ENCODE measurements at regions of chr9 and their contacts with region 1.

Region 1: GRCh38 chr9:120928483-120929228 is 2.1 kb upstream of the TRAF1 start:
- DNase-seq: peak; percentile 86
- H3K4me3 Mint-ChIP-seq: peak overlapping the region; percentile 80
- H3K27ac Mint-ChIP-seq: peak overlapping the region; percentile 99
- H3K4me1 Mint-ChIP-seq: peaks cover 64% of the 10 kb centered on the region
- H3K27me3 Mint-ChIP-seq: no peaks in the 10 kb centered on the region

Region 2: DNA sequence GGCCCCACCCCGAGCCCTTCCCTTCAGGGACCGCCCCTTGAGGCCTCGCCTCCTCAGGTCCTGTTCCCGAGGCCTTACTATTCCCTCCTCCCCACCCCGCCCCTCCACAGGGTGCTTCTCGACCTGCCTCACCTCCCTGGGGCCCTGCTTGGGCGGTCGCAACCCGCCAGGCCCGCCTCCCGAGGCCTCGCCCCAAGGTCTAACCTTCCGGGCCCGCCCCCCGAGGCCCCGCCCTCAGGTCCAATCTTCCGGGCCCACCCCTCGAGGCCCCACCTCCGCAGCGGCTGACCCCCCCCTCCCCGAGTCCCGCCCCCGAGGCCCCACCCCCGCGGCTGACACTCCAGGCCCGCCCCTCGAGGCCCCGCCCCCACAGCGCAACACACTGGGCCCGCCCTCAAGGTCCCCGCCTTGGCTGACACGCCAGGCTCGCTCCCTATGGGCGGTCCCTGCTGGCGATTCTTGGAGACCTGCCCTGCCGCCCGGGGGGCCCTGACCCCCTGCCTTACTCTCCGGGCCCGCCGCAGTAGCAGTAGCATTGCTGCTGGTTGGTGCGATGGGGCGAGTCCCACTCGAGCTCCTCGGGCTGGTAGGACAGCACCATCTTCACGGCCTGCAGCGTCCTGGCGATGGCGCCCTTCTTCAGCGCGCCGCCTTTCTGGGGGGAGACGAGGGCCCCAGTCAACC is 59.8 kb before region 1 on chr9:
- CTCF ChIA-PET with region 1: interaction called, 5 read pairs
- POLR2A ChIA-PET with region 1: interaction called, 17 read pairs
- intact Hi-C with region 1: loop called (anchors 1 kb)
- DNase-seq: peak; percentile 97
- H3K4me3 Mint-ChIP-seq: peak overlapping the region; percentile 80
- H3K27ac Mint-ChIP-seq: peak overlapping the region; percentile 87
- H3K4me1 Mint-ChIP-seq: peaks cover 46% of the 10 kb centered on the region
- H3K27me3 Mint-ChIP-seq: no peaks in the 10 kb centered on the region

Region 3: DNA sequence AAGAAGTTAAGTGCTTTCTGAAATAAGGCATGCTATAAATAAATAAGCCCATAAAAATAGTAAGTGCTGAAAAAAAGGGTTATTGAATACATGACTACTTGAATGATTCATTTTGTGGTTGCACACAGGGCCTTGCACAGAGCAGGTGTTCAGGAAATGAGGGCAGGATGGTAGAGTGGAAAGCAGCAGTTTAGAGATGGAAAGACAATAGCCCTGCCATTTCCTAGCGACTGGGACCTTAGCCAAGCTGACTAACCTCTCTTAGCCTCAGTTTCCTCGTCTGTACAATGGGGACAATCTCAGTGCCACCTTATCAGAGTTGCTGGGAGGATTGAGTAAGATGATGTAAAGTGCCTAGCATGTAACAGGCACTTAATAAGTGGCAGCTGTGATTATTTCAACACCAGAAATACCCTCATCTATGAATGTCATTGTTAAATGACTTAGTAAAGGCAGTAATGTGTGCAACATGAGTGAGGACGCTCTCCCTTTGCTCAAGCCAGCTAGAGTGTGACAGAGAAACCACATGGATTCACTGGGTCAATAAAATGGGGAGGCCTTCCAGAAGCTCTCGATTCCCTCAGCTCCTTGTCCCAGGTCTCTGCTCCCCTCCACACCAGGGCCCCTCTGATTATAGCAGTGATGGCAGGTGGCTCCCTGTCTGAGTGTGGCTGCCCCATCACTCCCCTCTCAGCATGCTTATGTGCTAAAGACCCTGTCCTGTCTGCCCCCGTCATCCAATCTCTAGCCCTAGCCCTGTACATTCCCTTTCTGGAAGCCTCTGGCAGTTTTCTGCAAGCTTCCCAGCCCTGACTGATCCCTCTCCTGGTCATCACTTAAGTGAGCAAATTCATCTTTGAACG is 35.7 kb before region 1 on chr9:
- CTCF ChIA-PET with region 1: interaction called, 6 read pairs
- POLR2A ChIA-PET with region 1: interaction called, 97 read pairs
- intact Hi-C with region 1: loop called (anchors 1 kb)
- DNase-seq: peak; percentile 81
- H3K4me3 Mint-ChIP-seq: peak overlapping the region; percentile 62
- H3K27ac Mint-ChIP-seq: peak overlapping the region; percentile 95
- H3K4me1 Mint-ChIP-seq: peaks cover 84% of the 10 kb centered on the region
- H3K27me3 Mint-ChIP-seq: no peaks in the 10 kb centered on the region

Region 4: GRCh38 chr9:120916588-120916987 is 12.1 kb before region 1 on chr9:
- CTCF ChIA-PET with region 1: interaction called, 76 read pairs
- POLR2A ChIA-PET with region 1: interaction called, 237 read pairs
- intact Hi-C with region 1: loop called (anchors 1 kb)
- DNase-seq: no peak
- H3K4me3 Mint-ChIP-seq: peak overlapping the region; percentile 51
- H3K27ac Mint-ChIP-seq: peak overlapping the region; percentile 79
- H3K4me1 Mint-ChIP-seq: peaks cover 87% of the 10 kb centered on the region
- H3K27me3 Mint-ChIP-seq: no peaks in the 10 kb centered on the region

Region 5: DNA sequence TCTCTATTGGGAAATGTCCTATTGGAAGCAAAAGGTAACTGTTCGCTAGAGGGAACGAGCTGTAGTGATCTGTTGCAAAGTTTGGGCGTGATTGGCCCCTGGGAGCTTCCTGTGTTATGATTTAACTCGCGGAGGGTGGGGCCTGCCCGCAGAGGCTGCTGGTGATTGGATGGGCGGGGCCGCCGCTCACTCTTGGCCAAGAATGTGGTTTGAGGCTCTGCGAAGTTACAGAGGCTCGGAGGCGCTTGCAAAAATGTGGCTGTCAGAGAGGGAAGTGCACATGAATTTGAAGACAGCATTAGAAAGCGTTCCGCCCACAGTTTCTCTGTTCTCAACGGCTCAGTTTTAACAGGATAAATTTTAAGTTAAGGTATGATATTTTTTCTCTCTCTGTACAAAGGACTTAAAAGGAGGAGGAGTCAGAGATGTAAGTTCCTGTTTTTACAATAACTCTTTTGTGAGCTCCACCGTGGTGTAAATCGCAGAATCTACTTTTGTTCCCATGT is 193.0 kb after region 1 on chr9:
- CTCF ChIA-PET with region 1: no interaction called
- POLR2A ChIA-PET with region 1: no interaction called
- intact Hi-C with region 1: loop called (anchors 2 kb)
- DNase-seq: peak; percentile 99
- H3K4me3 Mint-ChIP-seq: peak overlapping the region; percentile 77
- H3K27ac Mint-ChIP-seq: peak overlapping the region; percentile 89
- H3K4me1 Mint-ChIP-seq: peaks cover 48% of the 10 kb centered on the region
- H3K27me3 Mint-ChIP-seq: no peaks in the 10 kb centered on the region

Region 6: DNA sequence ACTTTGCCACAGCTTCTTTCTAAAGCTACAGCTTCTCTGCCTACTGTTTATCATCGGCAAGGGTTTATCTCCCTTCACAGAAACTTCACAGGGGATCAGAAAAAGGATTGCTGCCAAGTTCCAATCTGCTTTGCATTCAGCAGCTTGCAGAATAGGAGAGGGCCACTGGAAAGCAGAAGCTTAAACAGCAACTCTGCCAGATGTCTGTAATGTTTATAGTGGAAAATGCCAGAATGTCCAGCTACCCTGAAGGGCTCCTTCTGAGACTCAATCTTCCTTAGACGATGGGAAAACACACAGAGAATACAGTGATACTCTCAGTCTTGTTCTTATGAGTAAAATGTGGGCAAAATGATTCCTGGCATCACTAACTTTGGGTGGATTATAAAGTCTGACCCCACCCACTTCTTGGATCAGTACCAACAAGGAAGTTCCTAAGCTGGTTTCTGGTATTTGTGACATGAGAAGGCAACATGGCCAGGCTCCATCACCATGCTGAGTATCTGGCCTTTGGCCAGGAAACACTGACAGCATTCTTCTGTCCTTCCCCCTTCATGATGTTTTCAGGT is 422.4 kb after region 1 on chr9:
- CTCF ChIA-PET with region 1: no interaction called
- POLR2A ChIA-PET with region 1: no interaction called
- intact Hi-C with region 1: loop called (anchors 10 kb)
- DNase-seq: peak; percentile 29
- H3K4me3 Mint-ChIP-seq: no peak overlapping the region
- H3K27ac Mint-ChIP-seq: no peak overlapping the region
- H3K4me1 Mint-ChIP-seq: peaks cover 31% of the 10 kb centered on the region
- H3K27me3 Mint-ChIP-seq: no peaks in the 10 kb centered on the region